ENCODE measurements at regions of chr3 and their contacts with region 1.

Region 1: DNA sequence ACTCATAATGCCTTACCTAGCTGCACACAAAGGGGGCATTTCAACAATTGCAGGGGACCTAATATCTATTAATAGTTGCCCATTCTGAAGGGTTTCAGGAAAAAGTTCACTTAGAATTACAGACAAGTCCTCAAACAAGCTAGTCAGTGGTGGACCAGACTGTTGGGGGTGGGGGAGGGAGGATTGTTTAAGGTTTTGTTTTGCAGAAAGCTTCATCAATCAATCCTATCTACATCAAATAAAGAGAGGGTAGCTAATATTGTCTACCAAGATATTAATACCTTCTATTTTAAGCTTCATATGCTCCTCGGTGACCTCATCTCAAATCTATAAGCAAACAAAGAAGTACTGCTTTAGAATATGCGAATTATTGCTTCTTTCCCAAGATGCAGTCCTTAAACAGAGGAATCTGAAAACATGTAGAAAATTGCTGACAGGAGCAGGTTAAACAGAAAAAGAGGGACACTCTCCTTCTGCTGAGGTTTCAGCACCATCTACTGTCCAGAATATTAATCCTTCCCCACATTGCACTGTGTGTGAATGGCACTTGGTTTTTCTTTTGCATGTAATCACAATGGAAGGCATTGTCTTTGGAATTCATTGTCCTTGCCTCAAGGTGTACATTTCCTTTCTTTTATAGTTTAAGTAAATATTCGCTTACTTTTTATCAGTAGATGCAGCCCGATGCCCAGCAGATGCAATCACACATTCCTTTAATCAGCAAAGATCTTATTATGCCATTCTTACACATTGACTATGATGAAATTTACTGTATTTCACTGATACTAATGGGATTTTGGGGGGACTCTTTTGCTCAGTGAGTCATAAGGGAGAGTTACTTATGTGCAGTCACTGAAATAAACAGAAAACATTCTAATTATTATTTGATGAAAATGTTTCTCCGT is 94.7 kb downstream of the IL5RA start:
- DNase-seq: peak in 1 of 2 experiments; percentile 61
- H3K4me3 ChIP-seq: no peak overlapping the region
- H3K4me3 Mint-ChIP-seq: no peak overlapping the region
- H3K27ac Mint-ChIP-seq: no peak overlapping the region
- H3K4me1 ChIP-seq: peaks cover 23% of the 10 kb centered on the region
- H3K4me1 Mint-ChIP-seq: peaks cover 21% of the 10 kb centered on the region
- H3K27me3 ChIP-seq: no peaks in the 10 kb centered on the region
- H3K27me3 Mint-ChIP-seq: no peaks in the 10 kb centered on the region
- CTCF ChIP-seq: peak; percentile 43 to 50

Region 2: GRCh38 chr3:1275495-1275894 is 1739.9 kb before region 1 on chr3:
- CTCF ChIA-PET with region 1: no interaction called
- POLR2A ChIA-PET with region 1: no interaction called
- intact Hi-C with region 1: loop called (anchors 2 kb)
- DNase-seq: peak; percentile 30 to 38
- H3K4me3 ChIP-seq: no peak overlapping the region
- H3K4me3 Mint-ChIP-seq: no peak overlapping the region
- H3K27ac Mint-ChIP-seq: no peak overlapping the region
- H3K4me1 ChIP-seq: no peaks in the 10 kb centered on the region
- H3K4me1 Mint-ChIP-seq: no peaks in the 10 kb centered on the region
- H3K27me3 ChIP-seq: no peaks in the 10 kb centered on the region
- H3K27me3 Mint-ChIP-seq: peaks cover 6% of the 10 kb centered on the region
- CTCF ChIP-seq: peak; percentile 32 to 47

Region 3: GRCh38 chr3:2166552-2166951 is 848.9 kb before region 1 on chr3:
- CTCF ChIA-PET with region 1: no interaction called
- POLR2A ChIA-PET with region 1: no interaction called
- intact Hi-C with region 1: loop called (anchors 1 kb)
- DNase-seq: peak in 1 of 2 experiments; percentile 14
- H3K4me3 ChIP-seq: no peak overlapping the region
- H3K4me3 Mint-ChIP-seq: no peak overlapping the region
- H3K27ac Mint-ChIP-seq: no peak overlapping the region
- H3K4me1 ChIP-seq: no peaks in the 10 kb centered on the region
- H3K4me1 Mint-ChIP-seq: no peaks in the 10 kb centered on the region
- H3K27me3 ChIP-seq: no peaks in the 10 kb centered on the region
- H3K27me3 Mint-ChIP-seq: no peaks in the 10 kb centered on the region
- CTCF ChIP-seq: peak; percentile 20 to 50

Region 4: GRCh38 chr3:2770451-2770850 is 245.0 kb before region 1 on chr3:
- CTCF ChIA-PET with region 1: no interaction called
- POLR2A ChIA-PET with region 1: no interaction called
- intact Hi-C with region 1: loop called (anchors 1 kb)
- DNase-seq: peak; percentile 42 to 60
- H3K4me3 ChIP-seq: no peak overlapping the region
- H3K4me3 Mint-ChIP-seq: no peak overlapping the region
- H3K27ac Mint-ChIP-seq: peak overlapping the region; percentile 37
- H3K4me1 ChIP-seq: peaks cover 11% of the 10 kb centered on the region
- H3K4me1 Mint-ChIP-seq: peaks cover 24% of the 10 kb centered on the region
- H3K27me3 ChIP-seq: no peaks in the 10 kb centered on the region
- H3K27me3 Mint-ChIP-seq: no peaks in the 10 kb centered on the region
- CTCF ChIP-seq: no peak

Region 5: DNA sequence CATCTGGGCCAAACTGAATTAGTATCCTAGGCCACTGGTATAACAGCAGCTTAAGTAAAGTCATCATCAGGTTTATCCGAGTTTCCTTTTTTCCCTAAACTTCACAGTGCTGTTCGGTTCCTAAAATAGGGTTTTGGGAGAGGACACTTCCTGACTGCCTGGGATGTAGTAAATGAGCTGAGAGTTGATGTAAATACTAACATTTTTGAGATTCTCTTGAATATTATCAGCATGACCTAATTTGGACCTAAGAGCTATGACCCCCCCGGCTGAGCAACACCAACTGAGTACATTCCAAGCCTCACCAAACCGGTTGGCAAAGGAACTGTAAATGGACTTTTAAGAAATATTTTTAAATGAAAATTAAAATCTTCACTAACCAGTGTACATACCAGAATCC is 15.9 kb after region 1 on chr3:
- CTCF ChIA-PET with region 1: no interaction called
- POLR2A ChIA-PET with region 1: no interaction called
- intact Hi-C with region 1: loop called (anchors 1 kb)
- DNase-seq: peak in 1 of 2 experiments; percentile 31
- H3K4me3 ChIP-seq: no peak overlapping the region
- H3K4me3 Mint-ChIP-seq: no peak overlapping the region
- H3K27ac Mint-ChIP-seq: peak overlapping the region; percentile 59
- H3K4me1 ChIP-seq: peaks cover 28% of the 10 kb centered on the region
- H3K4me1 Mint-ChIP-seq: peaks cover 27% of the 10 kb centered on the region
- H3K27me3 ChIP-seq: no peaks in the 10 kb centered on the region
- H3K27me3 Mint-ChIP-seq: no peaks in the 10 kb centered on the region
- CTCF ChIP-seq: no peak

Region 6: GRCh38 chr3:3110299-3110630 is 94.8 kb after region 1 on chr3 and contains the start of gene IL5RA:
- CTCF ChIA-PET with region 1: no interaction called
- POLR2A ChIA-PET with region 1: no interaction called
- intact Hi-C with region 1: no loop called
- DNase-seq: peak in 1 of 2 experiments; percentile 24
- H3K4me3 ChIP-seq: no peak within 1 kb of the TSS
- H3K4me3 Mint-ChIP-seq: peak within 1 kb of the TSS; percentile 53
- H3K27ac Mint-ChIP-seq: peak within 1 kb of the TSS; percentile 53
- H3K4me1 ChIP-seq: peaks cover 17% of the 10 kb centered on the region
- H3K4me1 Mint-ChIP-seq: peaks cover 16% of the 10 kb centered on the region
- H3K27me3 ChIP-seq: no peaks in the 10 kb centered on the region
- H3K27me3 Mint-ChIP-seq: no peaks in the 10 kb centered on the region
- CTCF ChIP-seq: no peak
- total RNA-seq, gene IL5RA: 0.09 and 0.23 TPM in 2 replicates

Measured in Caco-2 (cell line).